PC-3 (cell line): ENCODE measurements at regions of chr14 and their contacts with region 1.

Region 1: DNA sequence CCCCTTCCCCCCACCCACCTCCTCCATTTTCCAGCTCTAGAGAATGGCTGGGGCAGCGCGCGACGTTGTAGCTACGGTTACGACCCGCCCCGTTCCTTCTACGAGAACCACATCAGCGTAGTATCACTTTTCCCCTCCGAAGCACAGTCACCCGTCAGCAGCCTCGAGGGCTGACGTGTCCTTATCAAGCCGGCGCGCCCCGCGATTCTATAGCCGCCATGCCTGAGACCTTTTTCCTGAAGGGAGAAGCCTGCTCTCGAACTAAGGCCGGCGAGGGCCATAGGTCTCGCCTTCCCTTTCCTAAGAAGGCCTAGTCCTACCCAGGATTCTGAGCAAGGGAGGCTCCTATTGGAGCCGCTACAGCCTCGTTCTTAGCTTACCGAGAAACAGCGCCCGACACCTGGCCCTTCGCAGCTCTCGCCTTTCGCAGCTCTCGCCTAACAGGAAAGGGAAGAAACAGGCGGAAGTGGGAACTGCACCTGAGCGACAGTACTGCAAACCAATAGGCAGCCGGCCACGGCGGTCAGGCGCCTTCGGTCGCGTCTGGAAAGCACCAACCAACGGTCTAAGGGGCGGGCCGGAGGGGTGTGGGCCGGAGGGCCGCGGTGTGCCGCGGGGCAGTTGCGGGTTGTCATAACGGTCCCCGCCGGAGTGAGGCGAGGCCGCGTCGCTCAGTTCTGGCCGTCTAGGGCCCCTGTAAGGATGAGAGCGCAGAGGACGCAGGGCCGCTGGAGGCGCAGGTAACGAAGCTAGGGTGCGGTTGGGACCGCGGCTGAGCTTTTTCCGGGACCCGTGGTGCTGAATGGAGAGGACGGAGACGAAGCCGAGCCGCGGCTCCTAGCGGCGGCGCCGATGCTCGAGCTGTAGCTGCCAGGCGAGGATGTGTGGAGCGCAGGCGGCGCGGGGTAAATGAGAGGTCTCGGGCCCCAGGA is at the starts of genes MGAT2 and RPL36AL:
- DNase-seq: peak; percentile 99
- ATAC-seq: peak; percentile 91
- H3K4me3 ChIP-seq: peak within 1 kb of the TSS; percentile 92
- H3K27ac ChIP-seq: peak within 1 kb of the TSS; percentile 85
- H3K4me1 ChIP-seq: peaks cover 45% of the 10 kb centered on the region
- H3K27me3 ChIP-seq: no peaks in the 10 kb centered on the region
- CTCF ChIP-seq: peak; percentile 31; the same call in 1 of the 2 replicates
- total RNA-seq, gene MGAT2: 39.5 and 51.4 TPM in 2 replicates
- total RNA-seq, gene RPL36AL: 408 and 411 TPM in 2 replicates

Region 2: DNA sequence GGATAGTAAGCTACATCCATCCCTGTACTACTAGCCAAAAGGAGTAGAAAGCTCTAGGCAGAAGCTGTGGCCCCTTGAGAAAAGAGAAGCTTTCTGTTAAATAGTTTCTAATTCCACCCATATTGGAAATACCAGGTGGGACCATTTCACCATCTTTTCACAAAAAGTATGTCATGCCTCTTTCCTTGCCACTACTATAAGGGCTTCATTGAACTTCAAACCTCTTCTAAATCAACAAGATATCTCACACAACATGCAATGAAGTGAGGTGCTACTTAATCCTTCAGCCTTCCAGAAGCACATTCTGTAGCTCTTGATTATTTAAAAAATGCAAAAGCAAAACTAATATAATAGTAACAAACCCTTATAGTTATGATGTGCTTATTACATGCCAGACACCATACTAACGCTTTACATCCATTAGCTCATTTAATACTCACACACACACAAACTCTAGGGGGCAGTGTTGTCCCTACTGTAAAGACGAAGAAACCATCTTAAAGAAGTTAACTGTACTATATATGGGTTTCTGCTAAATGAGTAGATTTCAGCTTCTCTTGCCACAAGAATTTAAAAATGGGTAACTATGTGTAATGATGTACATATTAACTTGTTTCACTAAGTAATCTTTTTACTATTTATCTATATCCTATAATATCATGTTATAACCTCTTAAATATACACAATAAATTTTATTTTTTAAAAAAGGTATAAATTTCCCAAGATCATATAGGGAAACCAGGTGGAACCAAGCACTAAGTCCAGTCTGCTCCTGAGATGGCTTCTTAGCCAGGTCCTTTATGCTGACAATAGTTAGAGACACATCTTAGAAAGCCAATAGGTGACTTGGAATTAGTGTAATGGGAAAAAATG is 158.7 kb before region 1 on chr14:
- CTCF ChIA-PET with region 1: interaction called, 7 read pairs
- POLR2A ChIA-PET with region 1: no interaction called
- intact Hi-C with region 1: loop called (anchors 2 kb)
- DNase-seq: peak; percentile 92
- ATAC-seq: peak; percentile 89
- H3K4me3 ChIP-seq: no peak overlapping the region
- H3K27ac ChIP-seq: no peak overlapping the region
- H3K4me1 ChIP-seq: no peaks in the 10 kb centered on the region
- H3K27me3 ChIP-seq: peaks cover 36% of the 10 kb centered on the region
- CTCF ChIP-seq: peak; percentile 93

Region 3: GRCh38 chr14:49585803-49586672 is 34.4 kb before region 1 on chr14 and contains the start of gene RPS29:
- CTCF ChIA-PET with region 1: no interaction called
- POLR2A ChIA-PET with region 1: interaction called, 12 read pairs
- intact Hi-C with region 1: loop called (anchors 1 kb)
- DNase-seq: peak; percentile 100
- ATAC-seq: peak; percentile 89
- H3K4me3 ChIP-seq: peak within 1 kb of the TSS; percentile 93
- H3K27ac ChIP-seq: peak within 1 kb of the TSS; percentile 59
- H3K4me1 ChIP-seq: peaks cover 20% of the 10 kb centered on the region
- H3K27me3 ChIP-seq: no peaks in the 10 kb centered on the region
- CTCF ChIP-seq: no peak
- total RNA-seq, gene RPS29: 1,420 and 1,912 TPM in 2 replicates

Region 4: GRCh38 chr14:49598485-49599300 is 21.8 kb before region 1 on chr14 and contains the start of gene LRR1:
- CTCF ChIA-PET with region 1: interaction called, 3 read pairs
- POLR2A ChIA-PET with region 1: interaction called, 9 read pairs
- intact Hi-C with region 1: loop called (anchors 1 kb)
- DNase-seq: peak; percentile 79
- ATAC-seq: peak; percentile 63
- H3K4me3 ChIP-seq: peak within 1 kb of the TSS; percentile 94
- H3K27ac ChIP-seq: peak within 1 kb of the TSS; percentile 82
- H3K4me1 ChIP-seq: peaks cover 29% of the 10 kb centered on the region
- H3K27me3 ChIP-seq: no peaks in the 10 kb centered on the region
- CTCF ChIP-seq: no peak
- total RNA-seq, gene LRR1: 46.9 and 53.0 TPM in 2 replicates

Region 5: DNA sequence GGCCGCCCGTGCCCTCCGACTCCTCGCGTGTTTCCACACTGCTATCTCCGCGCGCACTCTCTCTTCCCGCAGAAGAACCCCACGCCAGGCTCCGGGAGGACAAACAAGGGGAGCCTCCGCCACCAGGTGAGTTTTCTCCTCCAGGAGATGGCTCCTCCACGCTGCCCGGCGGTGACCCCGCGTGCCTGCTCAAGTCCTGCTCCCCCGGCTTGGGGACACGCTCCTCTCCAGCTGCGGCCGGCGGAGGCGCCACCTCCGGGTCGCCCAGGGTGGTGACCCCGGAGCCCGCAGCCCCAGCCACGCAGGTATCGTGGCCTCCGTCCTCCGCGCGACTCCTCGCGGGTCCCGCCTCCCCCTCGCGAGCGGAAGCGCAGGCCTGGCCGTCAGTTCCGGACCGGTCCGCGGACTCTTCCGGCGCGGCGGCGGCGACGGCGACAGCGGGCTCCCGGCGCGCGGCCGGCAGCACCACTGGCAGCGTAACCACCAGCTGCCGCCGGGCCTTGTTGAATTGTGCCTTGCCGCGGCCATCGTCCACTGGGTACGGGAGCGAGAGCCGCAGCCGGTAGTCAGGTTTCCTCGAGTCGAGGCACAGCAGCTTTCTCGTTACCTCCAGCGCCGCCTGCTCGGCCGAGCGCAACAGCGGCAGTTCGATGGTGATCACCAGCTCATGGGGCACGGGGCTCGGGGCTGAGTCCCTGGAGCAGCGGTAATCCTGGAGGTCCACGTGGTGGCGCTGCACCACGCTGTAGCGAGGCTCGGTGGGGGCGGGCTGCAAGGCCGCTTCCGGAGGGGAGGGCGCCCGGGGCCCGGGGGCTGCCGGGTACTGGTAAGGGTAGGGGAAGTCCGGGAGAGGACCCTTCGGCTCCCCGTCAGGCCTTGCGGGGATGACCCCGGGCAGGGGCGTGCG is 13.4 kb after region 1 on chr14:
- CTCF ChIA-PET with region 1: interaction called, 8 read pairs
- POLR2A ChIA-PET with region 1: interaction called, 18 read pairs
- intact Hi-C with region 1: no loop called
- DNase-seq: peak; percentile 97
- ATAC-seq: peak; percentile 78
- H3K4me3 ChIP-seq: peak overlapping the region; percentile 71
- H3K27ac ChIP-seq: peak overlapping the region; percentile 88
- H3K4me1 ChIP-seq: peaks cover 28% of the 10 kb centered on the region
- H3K27me3 ChIP-seq: no peaks in the 10 kb centered on the region
- CTCF ChIP-seq: peak; percentile 94

Region 6: DNA sequence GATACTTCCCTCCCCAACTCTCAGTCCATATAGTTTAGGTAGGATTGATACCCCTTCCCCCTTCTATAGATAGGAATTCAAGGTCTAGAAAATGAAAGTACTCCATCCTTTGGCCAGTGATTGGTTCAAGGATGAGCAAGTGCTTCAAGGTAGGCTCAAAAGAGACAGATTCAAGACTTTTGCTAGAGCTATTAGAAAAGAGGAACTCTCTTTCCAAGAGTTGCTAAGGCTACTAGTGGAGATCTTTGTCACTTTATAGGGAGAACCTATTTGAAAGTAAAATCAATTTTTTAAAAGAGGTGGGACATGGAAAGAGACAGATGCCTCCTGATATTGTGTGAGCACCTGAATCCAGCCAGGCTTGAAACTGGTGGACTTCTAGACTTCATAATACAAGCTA is 50.0 kb after region 1 on chr14:
- CTCF ChIA-PET with region 1: no interaction called
- POLR2A ChIA-PET with region 1: interaction called, 18 read pairs
- intact Hi-C with region 1: no loop called
- DNase-seq: no peak
- ATAC-seq: no peak
- H3K4me3 ChIP-seq: no peak overlapping the region
- H3K27ac ChIP-seq: no peak overlapping the region
- H3K4me1 ChIP-seq: no peaks in the 10 kb centered on the region
- H3K27me3 ChIP-seq: no peaks in the 10 kb centered on the region
- CTCF ChIP-seq: no peak

Region 7: DNA sequence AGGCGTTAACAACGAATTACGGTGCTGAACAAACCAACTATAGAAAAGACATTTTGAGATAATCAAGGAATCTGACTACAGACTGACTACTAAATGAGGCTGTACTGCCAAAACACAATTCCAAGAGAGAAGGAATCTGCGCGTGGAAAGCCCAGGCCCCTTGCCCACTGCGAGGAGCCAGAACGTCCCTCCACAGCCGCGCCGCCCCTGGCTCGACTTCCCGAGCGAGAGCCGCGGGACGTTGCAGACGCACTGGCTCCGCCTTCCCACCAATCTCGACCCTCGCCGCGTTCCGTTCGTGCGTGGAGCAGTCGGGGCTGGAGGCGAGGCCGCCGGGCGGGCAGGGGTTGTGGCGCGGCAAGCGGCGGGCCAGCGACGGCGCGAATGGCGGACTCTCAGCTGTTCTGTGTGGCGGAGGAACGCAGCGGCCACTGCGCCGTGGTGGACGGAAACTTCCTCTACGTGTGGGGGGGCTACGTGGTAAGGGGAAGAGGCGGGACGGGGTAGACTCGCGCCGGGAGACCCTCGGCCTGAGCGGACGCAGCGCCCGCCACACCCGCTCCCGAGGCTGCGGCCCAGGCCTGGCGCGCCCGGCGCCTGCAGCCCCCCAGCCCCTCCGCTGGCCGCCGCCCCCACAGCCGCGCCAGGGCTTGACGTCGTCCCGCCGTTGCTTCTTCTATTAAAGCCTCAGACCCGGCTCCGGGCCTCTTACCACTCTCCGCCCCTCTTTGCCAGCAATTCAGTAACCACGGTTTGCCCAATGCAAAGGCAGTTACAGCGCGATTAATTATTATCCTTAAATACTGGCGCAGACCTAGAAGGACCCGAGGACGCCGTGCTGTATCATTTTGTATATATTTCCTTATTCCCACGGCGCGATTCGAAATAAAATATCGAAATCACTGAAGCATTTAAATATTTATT is 72.6 kb after region 1 on chr14 and contains the start of gene KLHDC1:
- CTCF ChIA-PET with region 1: no interaction called
- POLR2A ChIA-PET with region 1: interaction called, 4 read pairs
- intact Hi-C with region 1: loop called (anchors 5 kb)
- DNase-seq: peak; percentile 68
- ATAC-seq: peak; percentile 72
- H3K4me3 ChIP-seq: peak within 1 kb of the TSS; percentile 87
- H3K27ac ChIP-seq: peak within 1 kb of the TSS; percentile 41
- H3K4me1 ChIP-seq: peaks cover 12% of the 10 kb centered on the region; the same call in 1 of the 2 replicates
- H3K27me3 ChIP-seq: no peaks in the 10 kb centered on the region
- CTCF ChIP-seq: no peak
- total RNA-seq, gene KLHDC1: 0.07 and 0.58 TPM in 2 replicates

Region 8: GRCh38 chr14:49720744-49721143 is 100.3 kb after region 1 on chr14:
- CTCF ChIA-PET with region 1: no interaction called
- POLR2A ChIA-PET with region 1: no interaction called
- intact Hi-C with region 1: no loop called
- DNase-seq: no peak
- ATAC-seq: no peak
- H3K4me3 ChIP-seq: no peak overlapping the region
- H3K27ac ChIP-seq: no peak overlapping the region
- H3K4me1 ChIP-seq: no peaks in the 10 kb centered on the region
- H3K27me3 ChIP-seq: no peaks in the 10 kb centered on the region
- CTCF ChIP-seq: no peak